ENCODE measurements at regions of chr6 and their contacts with region 1.

Region 1: GRCh38 chr6:27687154-27688013 is 214.5 kb upstream of the ZNF184 start:
- DNase-seq: peak; percentile 91
- ATAC-seq: peak; percentile 81
- H3K4me3 Mint-ChIP-seq: peak overlapping the region; percentile 87
- H3K27ac Mint-ChIP-seq: peak overlapping the region; percentile 84
- H3K4me1 Mint-ChIP-seq: peaks cover 20% of the 10 kb centered on the region
- H3K27me3 Mint-ChIP-seq: peaks cover 9% of the 10 kb centered on the region

Region 2: DNA sequence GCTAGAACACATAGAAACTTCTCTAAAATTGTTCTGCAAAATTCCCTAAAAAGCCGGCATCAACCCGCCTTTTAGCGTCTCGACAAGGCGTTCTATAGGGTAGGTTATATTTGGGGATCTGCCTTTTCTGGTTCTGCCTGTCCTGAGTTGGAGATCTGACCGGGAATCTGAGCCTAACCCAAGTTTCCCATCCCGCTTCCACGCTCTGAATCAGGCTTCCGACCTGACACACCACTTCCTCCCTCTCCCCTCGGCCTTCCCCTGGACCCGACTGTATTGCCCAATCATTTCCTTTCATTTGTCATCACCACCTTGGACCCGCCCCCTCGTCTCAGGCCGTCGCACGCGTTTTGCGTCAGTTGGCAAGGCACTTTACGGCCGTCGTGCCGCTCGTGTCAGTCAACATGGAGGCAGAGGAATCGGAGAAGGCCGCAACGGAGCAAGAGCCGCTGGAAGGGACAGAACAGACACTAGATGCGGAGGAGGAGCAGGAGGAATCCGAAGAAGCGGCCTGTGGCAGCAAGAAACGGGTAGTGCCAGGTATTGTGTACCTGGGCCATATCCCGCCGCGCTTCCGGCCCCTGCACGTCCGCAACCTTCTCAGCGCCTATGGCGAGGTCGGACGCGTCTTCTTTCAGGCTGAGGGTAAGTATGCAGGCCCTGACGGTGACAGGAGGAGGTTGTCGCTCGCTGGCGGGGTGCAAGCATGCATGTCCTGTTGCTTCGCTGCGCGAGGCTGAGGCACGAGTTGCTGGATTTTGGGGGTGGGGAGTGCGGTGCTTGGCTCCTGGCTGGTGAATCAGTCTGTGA is 1090.6 kb before region 1 on chr6 and contains the start of gene ABT1:
- CTCF ChIA-PET with region 1: no interaction called
- POLR2A ChIA-PET with region 1: no interaction called
- intact Hi-C with region 1: loop called in 1 of 2 experiments (anchors 5 kb)
- DNase-seq: peak; percentile 98
- ATAC-seq: peak; percentile 66
- H3K4me3 Mint-ChIP-seq: no peak within 1 kb of the TSS
- H3K27ac Mint-ChIP-seq: no peak within 1 kb of the TSS
- H3K4me1 Mint-ChIP-seq: peaks cover 41% of the 10 kb centered on the region
- H3K27me3 Mint-ChIP-seq: peaks cover 18% of the 10 kb centered on the region
- total RNA-seq, gene ABT1: 21.5 to 24.9 TPM

Region 3: GRCh38 chr6:27295301-27296081 is 391.9 kb before region 1 on chr6:
- CTCF ChIA-PET with region 1: no interaction called
- POLR2A ChIA-PET with region 1: interaction called, 3 read pairs
- intact Hi-C with region 1: loop called in 1 of 2 experiments (anchors 5 kb)
- DNase-seq: no peak
- ATAC-seq: no peak
- H3K4me3 Mint-ChIP-seq: no peak overlapping the region
- H3K27ac Mint-ChIP-seq: no peak overlapping the region
- H3K4me1 Mint-ChIP-seq: peaks cover 11% of the 10 kb centered on the region
- H3K27me3 Mint-ChIP-seq: peaks cover 72% of the 10 kb centered on the region

Region 4: GRCh38 chr6:27479319-27480182 is 207.8 kb before region 1 on chr6:
- CTCF ChIA-PET with region 1: interaction called, 3 read pairs
- POLR2A ChIA-PET with region 1: no interaction called
- intact Hi-C with region 1: loop called (anchors 1 to 10 kb)
- DNase-seq: peak; percentile 89
- ATAC-seq: peak; percentile 69
- H3K4me3 Mint-ChIP-seq: no peak overlapping the region
- H3K27ac Mint-ChIP-seq: no peak overlapping the region
- H3K4me1 Mint-ChIP-seq: peaks cover 6% of the 10 kb centered on the region
- H3K27me3 Mint-ChIP-seq: no peaks in the 10 kb centered on the region

Region 5: DNA sequence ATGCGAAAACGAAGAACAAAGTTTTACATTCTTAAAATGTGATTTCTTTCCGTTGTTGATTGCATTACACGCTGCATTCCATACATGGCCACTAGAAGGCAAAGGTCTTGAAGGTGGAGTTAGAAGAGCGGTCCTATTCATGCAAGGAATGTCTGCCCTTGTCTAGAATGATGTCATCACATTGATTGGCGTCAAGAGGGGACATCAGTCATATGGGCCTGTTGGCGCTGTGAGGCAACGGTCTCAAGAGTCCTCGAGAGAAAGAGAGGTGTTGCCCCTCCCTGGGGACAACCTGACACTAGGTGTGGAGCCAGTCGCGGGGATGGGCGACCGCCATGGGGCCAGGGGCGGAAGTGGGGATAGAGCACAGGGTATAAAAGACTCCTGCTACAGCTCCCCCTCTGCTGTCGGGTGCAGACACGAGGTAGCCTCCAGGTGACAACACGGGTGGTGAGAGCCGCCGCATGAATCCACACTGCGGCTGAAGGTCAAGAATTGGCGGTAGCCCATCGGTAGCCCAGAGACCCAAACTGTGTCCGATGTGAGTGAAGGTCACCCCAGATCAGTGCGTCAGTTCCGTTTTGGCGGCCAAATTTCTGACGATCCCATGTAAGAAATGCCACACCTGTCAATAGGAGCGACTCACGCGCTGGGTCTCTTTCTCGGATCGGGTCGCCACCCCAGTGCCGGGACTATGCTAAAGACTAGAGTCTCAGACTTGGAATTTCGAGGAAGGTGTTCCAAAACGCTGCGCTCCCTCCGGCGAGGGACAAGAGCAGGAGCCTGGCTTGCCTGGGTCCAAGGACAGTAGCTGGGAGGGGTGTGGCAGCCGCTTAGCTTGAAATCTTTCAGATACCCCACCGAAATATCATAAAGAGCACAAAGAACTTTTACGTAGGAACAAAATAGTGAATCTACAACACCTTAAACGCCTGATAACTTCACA is 121.3 kb before region 1 on chr6:
- CTCF ChIA-PET with region 1: no interaction called
- POLR2A ChIA-PET with region 1: no interaction called
- intact Hi-C with region 1: no loop called
- DNase-seq: peak; percentile 14
- ATAC-seq: peak; percentile 55
- H3K4me3 Mint-ChIP-seq: peak overlapping the region; percentile 3
- H3K27ac Mint-ChIP-seq: no peak overlapping the region
- H3K4me1 Mint-ChIP-seq: peaks cover 6% of the 10 kb centered on the region
- H3K27me3 Mint-ChIP-seq: peaks cover 58% of the 10 kb centered on the region

Region 6: GRCh38 chr6:27608916-27609883 is 78.2 kb before region 1 on chr6:
- CTCF ChIA-PET with region 1: no interaction called
- POLR2A ChIA-PET with region 1: no interaction called
- intact Hi-C with region 1: loop called in 1 of 2 experiments (anchors 5 kb)
- DNase-seq: no peak
- ATAC-seq: no peak
- H3K4me3 Mint-ChIP-seq: no peak overlapping the region
- H3K27ac Mint-ChIP-seq: no peak overlapping the region
- H3K4me1 Mint-ChIP-seq: peaks cover 13% of the 10 kb centered on the region
- H3K27me3 Mint-ChIP-seq: peaks cover 46% of the 10 kb centered on the region

Region 7: DNA sequence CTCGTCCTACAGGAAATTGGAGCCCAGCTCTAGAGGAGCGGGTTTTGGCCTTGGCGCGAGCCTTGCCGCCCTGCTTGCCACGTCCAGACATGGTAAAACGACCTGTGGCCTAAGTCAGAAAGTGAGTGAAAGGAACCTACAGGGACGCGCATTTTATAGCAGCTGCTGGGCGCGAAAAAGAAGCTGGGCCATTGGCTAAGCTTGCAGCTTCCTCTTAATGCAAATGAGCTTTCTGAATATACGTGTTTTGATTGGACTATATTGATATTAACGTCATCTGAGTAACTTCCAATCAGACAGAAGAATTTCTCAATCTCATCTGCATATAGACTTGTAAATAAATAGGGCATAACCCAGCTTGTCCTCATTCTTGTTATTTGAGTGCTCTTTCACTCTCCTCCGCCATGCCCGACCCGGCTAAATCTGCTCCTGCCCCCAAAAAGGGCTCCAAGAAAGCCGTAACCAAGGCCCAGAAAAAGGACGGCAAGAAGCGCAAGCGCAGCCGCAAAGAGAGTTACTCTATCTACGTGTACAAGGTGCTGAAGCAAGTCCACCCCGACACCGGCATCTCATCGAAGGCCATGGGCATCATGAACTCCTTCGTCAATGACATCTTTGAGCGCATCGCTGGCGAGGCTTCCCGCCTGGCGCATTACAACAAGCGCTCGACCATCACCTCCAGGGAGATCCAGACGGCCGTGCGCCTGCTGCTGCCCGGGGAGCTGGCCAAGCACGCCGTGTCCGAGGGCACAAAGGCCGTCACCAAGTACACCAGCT is 205.9 kb after region 1 on chr6:
- CTCF ChIA-PET with region 1: interaction called, 6 read pairs
- POLR2A ChIA-PET with region 1: no interaction called
- intact Hi-C with region 1: loop called in 1 of 2 experiments (anchors 5 kb)
- DNase-seq: peak; percentile 94
- ATAC-seq: peak; percentile 64
- H3K4me3 Mint-ChIP-seq: no peak overlapping the region
- H3K27ac Mint-ChIP-seq: no peak overlapping the region
- H3K4me1 Mint-ChIP-seq: peaks cover 31% of the 10 kb centered on the region
- H3K27me3 Mint-ChIP-seq: no peaks in the 10 kb centered on the region

Measured in activated CD4-positive, alpha-beta T cell treated with anti-CD3 and anti-CD28 coated beads for 36 hours (primary cell).